BJ (cell line): ENCODE measurements at regions of chr6 and their contacts with region 1.

Region 1: DNA sequence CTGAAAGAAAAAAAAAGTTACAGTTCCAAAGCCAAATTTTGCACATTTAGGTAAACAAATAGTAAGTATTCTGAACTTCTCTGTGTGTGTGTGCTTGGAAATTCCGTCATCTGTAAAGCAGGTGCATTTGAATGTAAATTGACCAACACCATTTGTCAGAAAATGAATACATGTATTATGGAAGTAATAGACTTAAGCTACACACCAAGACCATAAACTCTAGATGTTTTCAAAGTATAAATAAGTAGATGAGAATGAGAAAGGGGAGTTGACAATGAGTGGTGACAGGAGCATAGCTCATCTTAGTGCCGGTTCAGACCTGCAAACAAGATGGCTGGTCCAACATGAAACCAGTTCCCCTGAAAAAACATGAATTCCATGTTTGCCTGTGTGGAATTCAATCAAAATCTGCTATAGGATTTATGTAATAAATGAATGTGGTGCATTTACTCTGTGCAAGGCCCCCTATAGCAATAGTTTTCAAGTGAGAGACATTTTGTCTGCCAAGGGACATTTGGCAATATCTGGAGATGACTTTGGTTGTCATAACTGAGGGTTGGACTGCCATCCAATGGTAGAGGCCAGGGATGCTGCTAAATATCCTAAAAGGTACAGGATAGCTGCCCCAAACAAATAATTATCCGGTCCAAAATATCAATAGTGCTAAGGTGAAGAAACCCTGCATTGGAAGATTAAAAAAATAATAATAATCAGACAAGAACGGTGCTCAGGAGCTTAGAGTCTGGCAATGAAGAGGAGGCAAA is 11.0 kb upstream of the FILIP1 start:
- DNase-seq: no peak
- H3K4me3 ChIP-seq: no peak overlapping the region
- H3K27me3 ChIP-seq: no peaks in the 10 kb centered on the region
- CTCF ChIP-seq: peak; percentile 31; the same call in 1 of the 2 replicates

Region 2: DNA sequence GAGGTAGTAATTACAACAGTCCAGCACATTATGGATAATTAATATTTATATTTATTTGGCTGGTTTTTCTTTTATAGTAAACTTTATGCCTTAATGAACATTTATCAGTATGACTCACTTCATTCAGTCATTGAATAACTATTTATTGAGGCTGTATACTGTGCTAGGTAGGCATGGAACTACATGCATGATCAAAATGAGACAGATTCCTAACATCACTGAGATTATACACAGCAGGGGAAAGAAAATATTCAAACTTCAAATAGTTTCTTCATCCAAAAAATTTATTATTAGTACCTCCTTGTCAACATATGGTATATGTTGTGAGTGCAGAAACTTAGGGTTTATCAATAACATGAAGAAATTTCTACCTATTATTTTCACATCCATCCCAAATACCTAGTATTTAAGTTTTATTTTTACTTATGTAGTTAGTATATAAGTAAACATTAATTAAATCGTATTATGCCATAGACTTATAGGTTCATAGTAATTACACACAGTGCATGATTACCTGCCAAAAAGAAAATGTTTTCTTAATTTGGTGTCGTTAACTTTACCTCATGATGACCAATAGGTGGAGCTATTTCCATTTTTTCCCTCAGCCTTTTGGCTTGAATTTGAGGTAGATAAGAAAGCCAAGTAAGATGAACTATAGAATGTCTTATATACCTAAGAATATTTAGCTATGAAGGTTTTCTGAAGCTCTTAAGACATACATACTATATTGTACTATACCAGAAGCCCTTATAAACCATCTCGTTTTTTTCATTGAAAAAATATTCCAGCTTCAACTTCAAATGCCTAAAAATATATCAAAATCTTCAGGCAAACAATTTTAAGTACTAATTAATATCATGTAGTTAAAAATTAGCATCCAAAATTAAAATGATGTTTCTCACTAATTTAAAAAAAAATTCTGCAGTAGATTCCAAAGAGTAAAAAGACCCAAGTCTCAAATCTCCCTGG is 207.6 kb before region 1 on chr6:
- CTCF ChIA-PET with region 1: interaction called, 12 read pairs
- POLR2A ChIA-PET with region 1: no interaction called
- DNase-seq: no peak
- H3K4me3 ChIP-seq: no peak overlapping the region
- H3K27me3 ChIP-seq: no peaks in the 10 kb centered on the region
- CTCF ChIP-seq: peak; percentile 59